GM12878 (cell line): ENCODE measurements at regions of chr4 and their contacts with region 1.

Region 1: GRCh38 chr4:125314676-125315575 is at the start of gene FAT4:
- DNase-seq: no peak
- ATAC-seq: peak; percentile 60
- H3K4me3 ChIP-seq: peak within 1 kb of the TSS; percentile 61
- H3K27ac ChIP-seq: no peak within 1 kb of the TSS
- H3K4me1 ChIP-seq: no peaks in the 10 kb centered on the region
- H3K27me3 ChIP-seq: peaks cover 6 to 29% of the 10 kb centered on the region in 2 experiments
- CTCF ChIP-seq: no peak
- EP300 ChIP-seq: no peak
- POLR2A ChIP-seq: no peak
- RAD21 ChIP-seq: no peak
- polyA plus RNA-seq, gene FAT4: not detected

Region 2: GRCh38 chr4:124288706-124289483 is 1026.0 kb before region 1 on chr4:
- CTCF ChIA-PET with region 1: no interaction called
- POLR2A ChIA-PET with region 1: no interaction called
- RAD21 ChIA-PET with region 1: no interaction called
- SMC1A ChIA-PET with region 1: no interaction called
- in situ Hi-C with region 1: no loop called
- intact Hi-C with region 1: no loop called
- DNase-seq: no peak
- ATAC-seq: no peak
- H3K4me3 ChIP-seq: no peak overlapping the region
- H3K27ac ChIP-seq: no peak overlapping the region
- H3K4me1 ChIP-seq: no peaks in the 10 kb centered on the region
- H3K27me3 ChIP-seq: no peaks in the 10 kb centered on the region
- CTCF ChIP-seq: no peak
- EP300 ChIP-seq: no peak
- POLR2A ChIP-seq: no peak
- RAD21 ChIP-seq: no peak

Region 3: GRCh38 chr4:125464146-125464545 is 149.2 kb after region 1 on chr4:
- CTCF ChIA-PET with region 1: no interaction called
- POLR2A ChIA-PET with region 1: no interaction called
- RAD21 ChIA-PET with region 1: no interaction called
- SMC1A ChIA-PET with region 1: no interaction called
- in situ Hi-C with region 1: no loop called
- intact Hi-C with region 1: no loop called
- DNase-seq: no peak
- ATAC-seq: no peak
- H3K4me3 ChIP-seq: no peak overlapping the region
- H3K27ac ChIP-seq: no peak overlapping the region
- H3K4me1 ChIP-seq: no peaks in the 10 kb centered on the region
- H3K27me3 ChIP-seq: no peaks in the 10 kb centered on the region
- CTCF ChIP-seq: no peak
- EP300 ChIP-seq: no peak
- POLR2A ChIP-seq: no peak
- RAD21 ChIP-seq: no peak

Region 4: GRCh38 chr4:125741825-125742452 is 427.0 kb after region 1 on chr4:
- CTCF ChIA-PET with region 1: no interaction called
- POLR2A ChIA-PET with region 1: no interaction called
- RAD21 ChIA-PET with region 1: no interaction called
- SMC1A ChIA-PET with region 1: no interaction called
- in situ Hi-C with region 1: no loop called
- intact Hi-C with region 1: loop called (anchors 1 kb)
- DNase-seq: no peak
- ATAC-seq: peak; percentile 68; the same call in 2 of the 3 replicates
- H3K4me3 ChIP-seq: no peak overlapping the region
- H3K27ac ChIP-seq: no peak overlapping the region
- H3K4me1 ChIP-seq: no peaks in the 10 kb centered on the region
- H3K27me3 ChIP-seq: no peaks in the 10 kb centered on the region
- CTCF ChIP-seq: peak in 2 of 3 experiments; percentile 10 to 22; a peak in 2 of 6 replicates
- EP300 ChIP-seq: no peak
- POLR2A ChIP-seq: no peak
- RAD21 ChIP-seq: 0 out of 2 replicates have a peak, but pooled peaks have one; percentile 17

Region 5: DNA sequence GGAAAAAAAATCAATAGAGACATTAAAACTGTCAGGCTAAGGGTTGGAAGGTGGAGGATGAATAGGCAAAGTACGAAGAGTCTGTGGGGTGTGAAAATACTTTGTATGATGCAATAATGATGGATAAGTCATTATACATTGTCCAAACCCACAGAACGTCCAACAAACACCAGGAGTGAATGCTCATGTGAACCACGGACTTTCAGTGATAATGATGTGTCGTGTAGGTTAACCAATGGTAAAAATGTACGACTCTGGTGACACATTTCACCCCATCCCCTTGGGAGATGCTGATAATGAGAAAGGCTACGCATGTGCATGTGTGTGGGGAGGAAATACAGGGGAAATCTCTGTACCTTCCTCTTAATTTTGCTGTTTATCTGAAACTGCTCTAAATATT is 665.0 kb after region 1 on chr4:
- CTCF ChIA-PET with region 1: interaction called, 5 read pairs
- POLR2A ChIA-PET with region 1: no interaction called
- RAD21 ChIA-PET with region 1: no interaction called
- SMC1A ChIA-PET with region 1: interaction called, 3 read pairs
- in situ Hi-C with region 1: no loop called
- intact Hi-C with region 1: loop called (anchors 10 kb)
- DNase-seq: no peak
- ATAC-seq: peak; percentile 84
- H3K4me3 ChIP-seq: no peak overlapping the region
- H3K27ac ChIP-seq: no peak overlapping the region
- H3K4me1 ChIP-seq: no peaks in the 10 kb centered on the region
- H3K27me3 ChIP-seq: no peaks in the 10 kb centered on the region
- CTCF ChIP-seq: no peak
- EP300 ChIP-seq: no peak
- POLR2A ChIP-seq: no peak
- RAD21 ChIP-seq: no peak

Region 6: GRCh38 chr4:126405369-126405982 is 1090.5 kb after region 1 on chr4:
- CTCF ChIA-PET with region 1: interaction called, 3 read pairs
- POLR2A ChIA-PET with region 1: no interaction called
- RAD21 ChIA-PET with region 1: no interaction called
- SMC1A ChIA-PET with region 1: no interaction called
- in situ Hi-C with region 1: loop called (anchors 5 kb)
- intact Hi-C with region 1: loop called (anchors 5 kb)
- DNase-seq: no peak
- ATAC-seq: peak; percentile 94
- H3K4me3 ChIP-seq: no peak overlapping the region
- H3K27ac ChIP-seq: no peak overlapping the region
- H3K4me1 ChIP-seq: no peaks in the 10 kb centered on the region
- H3K27me3 ChIP-seq: no peaks in the 10 kb centered on the region
- CTCF ChIP-seq: peak; percentile 52 to 66 (median 56)
- EP300 ChIP-seq: no peak
- POLR2A ChIP-seq: no peak
- RAD21 ChIP-seq: peak; percentile 48; the same call in 1 of the 2 replicates

Region 7: GRCh38 chr4:126604268-126604867 is 1289.4 kb after region 1 on chr4:
- CTCF ChIA-PET with region 1: interaction called, 9 read pairs
- POLR2A ChIA-PET with region 1: no interaction called
- RAD21 ChIA-PET with region 1: interaction called, 3 read pairs
- SMC1A ChIA-PET with region 1: no interaction called
- in situ Hi-C with region 1: loop called (anchors 10 kb)
- intact Hi-C with region 1: loop called (anchors 1 kb)
- DNase-seq: no peak
- ATAC-seq: peak; percentile 80
- H3K4me3 ChIP-seq: no peak overlapping the region
- H3K27ac ChIP-seq: no peak overlapping the region
- H3K4me1 ChIP-seq: no peaks in the 10 kb centered on the region
- H3K27me3 ChIP-seq: no peaks in the 10 kb centered on the region
- CTCF ChIP-seq: peak; percentile 50 to 56 (median 51); a peak in 5 of 6 replicates
- EP300 ChIP-seq: no peak
- POLR2A ChIP-seq: no peak
- RAD21 ChIP-seq: peak; percentile 50; the same call in 1 of the 2 replicates